ENCODE measurements at regions of chr1 and their contacts with region 1.

Region 1: GRCh38 chr1:116971258-116971860 is 30.2 kb upstream of the CD101 start:
- DNase-seq: no peak
- H3K4me3 ChIP-seq: no peak overlapping the region
- H3K27ac ChIP-seq: no peak overlapping the region
- H3K4me1 ChIP-seq: 0 out of 2 replicates have a peak, but pooled peaks cover 4% of the 10 kb centered on the region
- H3K27me3 ChIP-seq: no peaks in the 10 kb centered on the region
- CTCF ChIP-seq: no peak

Region 2: DNA sequence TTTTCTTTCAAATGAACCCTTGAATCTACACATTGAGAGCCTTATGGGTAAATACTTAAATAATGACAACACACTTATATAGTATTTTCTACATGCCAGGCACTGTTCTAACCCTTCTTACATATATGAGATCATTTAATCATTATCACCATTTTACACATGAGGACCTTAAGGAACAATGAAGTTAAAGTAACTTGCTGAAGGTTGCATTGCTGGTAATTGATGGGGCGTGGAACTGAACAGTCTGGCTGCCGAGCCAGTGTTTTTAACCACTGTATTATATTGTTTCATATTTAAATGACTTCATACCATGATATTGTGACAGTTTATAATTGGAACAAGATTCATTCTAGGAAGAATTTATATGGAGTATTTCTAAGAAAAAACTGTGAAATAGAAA is 522.5 kb after region 1 on chr1:
- CTCF ChIA-PET with region 1: interaction called, 12 read pairs
- POLR2A ChIA-PET with region 1: no interaction called
- intact Hi-C with region 1: no loop called
- DNase-seq: no peak
- H3K4me3 ChIP-seq: no peak overlapping the region
- H3K27ac ChIP-seq: no peak overlapping the region
- H3K4me1 ChIP-seq: no peaks in the 10 kb centered on the region
- H3K27me3 ChIP-seq: no peaks in the 10 kb centered on the region
- CTCF ChIP-seq: no peak

Measured in PC-9 (cell line).